A673 (cell line): ENCODE measurements at regions of chr2 and their contacts with region 1.

Region 1: GRCh38 chr2:44918095-44918775 is 23.3 kb upstream of the SIX3 start:
- DNase-seq: no peak
- H3K4me3 ChIP-seq: no peak overlapping the region
- H3K27ac ChIP-seq: no peak overlapping the region
- H3K4me1 ChIP-seq: no peaks in the 10 kb centered on the region
- H3K27me3 ChIP-seq: peaks cover 16% of the 10 kb centered on the region
- CTCF ChIP-seq: no peak

Region 2: GRCh38 chr2:44937688-44938240 is 19.5 kb after region 1 on chr2:
- CTCF ChIA-PET with region 1: no interaction called
- POLR2A ChIA-PET with region 1: interaction called, 12 read pairs
- intact Hi-C with region 1: no loop called
- DNase-seq: peak; percentile 46
- H3K4me3 ChIP-seq: peak overlapping the region; percentile 45
- H3K27ac ChIP-seq: no peak overlapping the region
- H3K4me1 ChIP-seq: peaks cover 16% of the 10 kb centered on the region
- H3K27me3 ChIP-seq: peaks cover 84% of the 10 kb centered on the region
- CTCF ChIP-seq: no peak

Region 3: GRCh38 chr2:45256867-45257641 is 338.8 kb after region 1 on chr2:
- CTCF ChIA-PET with region 1: no interaction called
- POLR2A ChIA-PET with region 1: no interaction called
- intact Hi-C with region 1: no loop called
- DNase-seq: no peak
- H3K4me3 ChIP-seq: no peak overlapping the region
- H3K27ac ChIP-seq: no peak overlapping the region
- H3K4me1 ChIP-seq: no peaks in the 10 kb centered on the region
- H3K27me3 ChIP-seq: no peaks in the 10 kb centered on the region
- CTCF ChIP-seq: no peak